ENCODE measurements at regions of chr3 and their contacts with region 1.

Region 1: DNA sequence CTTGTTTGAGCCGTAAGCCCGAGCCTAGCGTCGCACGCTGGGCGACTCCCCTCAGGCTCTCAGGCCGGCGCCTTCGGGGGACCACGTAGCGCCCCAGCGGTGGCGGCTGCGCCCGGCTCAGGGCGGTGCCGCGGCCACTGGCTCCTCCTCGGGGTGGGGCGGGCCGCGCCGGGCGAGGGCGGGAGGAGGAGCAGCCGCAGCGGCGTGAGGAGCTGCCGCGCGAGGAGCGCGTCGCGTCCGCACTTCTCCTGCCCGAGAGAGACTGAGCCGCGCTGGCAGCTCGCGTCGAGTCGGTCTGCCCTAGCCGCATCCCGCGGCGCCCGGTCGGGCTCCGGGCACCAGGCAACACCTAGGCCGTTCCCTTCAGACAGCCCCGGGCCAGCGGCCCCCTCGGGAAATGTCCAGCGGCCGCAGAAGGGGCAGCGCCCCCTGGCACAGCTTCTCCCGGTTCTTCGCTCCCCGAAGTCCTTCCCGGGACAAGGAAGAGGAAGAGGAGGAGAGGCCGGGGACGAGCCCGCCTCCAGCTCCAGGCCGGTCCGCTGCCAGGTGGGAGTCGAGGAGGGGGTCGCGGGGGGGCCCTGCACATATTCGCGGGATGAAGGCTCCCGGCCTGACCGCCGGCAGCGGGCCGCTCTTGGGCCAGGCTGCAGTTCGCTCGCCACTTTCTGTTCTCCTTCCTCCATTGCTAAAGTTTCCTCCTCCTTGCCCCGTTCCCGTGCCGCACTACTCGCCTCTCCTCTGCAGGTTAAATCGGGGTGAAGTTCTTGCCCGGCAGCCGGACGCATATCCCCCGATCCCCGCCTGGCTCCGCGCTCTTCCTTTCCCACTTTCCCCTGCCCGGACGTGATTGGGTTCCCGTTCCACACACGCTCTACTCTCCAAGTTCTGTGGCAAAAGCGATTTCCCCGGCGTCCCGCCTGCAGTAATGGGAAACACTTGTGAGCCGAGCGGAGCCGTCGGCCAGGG is at the start of gene CRYBG3:
- DNase-seq: peak; percentile 85
- H3K4me3 Mint-ChIP-seq: peak within 1 kb of the TSS; percentile 100
- H3K27ac Mint-ChIP-seq: peak within 1 kb of the TSS; percentile 88
- H3K4me1 Mint-ChIP-seq: peaks cover 20% of the 10 kb centered on the region
- H3K27me3 Mint-ChIP-seq: peaks cover 40% of the 10 kb centered on the region
- total RNA-seq, gene CRYBG3: 7.2 and 7.5 TPM in 2 replicates

Region 2: GRCh38 chr3:97409612-97410011 is 412.5 kb before region 1 on chr3:
- intact Hi-C with region 1: no loop called
- DNase-seq: no peak
- H3K4me3 Mint-ChIP-seq: no peak overlapping the region
- H3K27ac Mint-ChIP-seq: no peak overlapping the region
- H3K4me1 Mint-ChIP-seq: no peaks in the 10 kb centered on the region
- H3K27me3 Mint-ChIP-seq: no peaks in the 10 kb centered on the region

Region 3: DNA sequence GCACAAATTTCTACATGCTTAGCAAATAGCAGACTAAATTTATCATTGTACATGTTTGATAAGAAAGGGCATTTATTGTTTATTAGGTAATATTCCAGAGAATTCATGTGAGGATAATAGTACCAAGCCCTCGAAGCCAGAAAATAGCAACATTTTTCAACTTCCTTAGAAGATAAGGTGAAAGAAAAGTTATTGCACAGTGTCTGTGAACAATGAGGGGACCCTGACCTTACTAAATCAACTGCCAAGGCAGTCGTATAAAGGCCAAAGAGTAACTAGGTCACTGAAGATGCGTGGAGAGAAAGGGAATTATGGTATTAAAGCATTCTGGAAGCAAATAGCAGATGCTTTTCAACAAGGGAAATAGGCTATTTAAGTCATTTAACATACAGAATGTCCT is 77.8 kb before region 1 on chr3:
- intact Hi-C with region 1: no loop called
- DNase-seq: no peak
- H3K4me3 Mint-ChIP-seq: no peak overlapping the region
- H3K27ac Mint-ChIP-seq: no peak overlapping the region
- H3K4me1 Mint-ChIP-seq: no peaks in the 10 kb centered on the region
- H3K27me3 Mint-ChIP-seq: peaks cover 14% of the 10 kb centered on the region

Region 4: GRCh38 chr3:97764407-97765238 is 57.5 kb before region 1 on chr3 and contains the start of gene ARL6:
- intact Hi-C with region 1: loop called (anchors 1 kb)
- DNase-seq: peak; percentile 69
- H3K4me3 Mint-ChIP-seq: peak within 1 kb of the TSS; percentile 89
- H3K27ac Mint-ChIP-seq: peak within 1 kb of the TSS; percentile 82
- H3K4me1 Mint-ChIP-seq: peaks cover 19% of the 10 kb centered on the region
- H3K27me3 Mint-ChIP-seq: peaks cover 3% of the 10 kb centered on the region
- total RNA-seq, gene ARL6: 3.2 and 3.9 TPM in 2 replicates

Region 5: GRCh38 chr3:97793420-97794019 is 28.6 kb before region 1 on chr3:
- intact Hi-C with region 1: loop called (anchors 2 kb)
- DNase-seq: no peak
- H3K4me3 Mint-ChIP-seq: no peak overlapping the region
- H3K27ac Mint-ChIP-seq: no peak overlapping the region
- H3K4me1 Mint-ChIP-seq: peaks cover 2% of the 10 kb centered on the region
- H3K27me3 Mint-ChIP-seq: no peaks in the 10 kb centered on the region

Region 6: DNA sequence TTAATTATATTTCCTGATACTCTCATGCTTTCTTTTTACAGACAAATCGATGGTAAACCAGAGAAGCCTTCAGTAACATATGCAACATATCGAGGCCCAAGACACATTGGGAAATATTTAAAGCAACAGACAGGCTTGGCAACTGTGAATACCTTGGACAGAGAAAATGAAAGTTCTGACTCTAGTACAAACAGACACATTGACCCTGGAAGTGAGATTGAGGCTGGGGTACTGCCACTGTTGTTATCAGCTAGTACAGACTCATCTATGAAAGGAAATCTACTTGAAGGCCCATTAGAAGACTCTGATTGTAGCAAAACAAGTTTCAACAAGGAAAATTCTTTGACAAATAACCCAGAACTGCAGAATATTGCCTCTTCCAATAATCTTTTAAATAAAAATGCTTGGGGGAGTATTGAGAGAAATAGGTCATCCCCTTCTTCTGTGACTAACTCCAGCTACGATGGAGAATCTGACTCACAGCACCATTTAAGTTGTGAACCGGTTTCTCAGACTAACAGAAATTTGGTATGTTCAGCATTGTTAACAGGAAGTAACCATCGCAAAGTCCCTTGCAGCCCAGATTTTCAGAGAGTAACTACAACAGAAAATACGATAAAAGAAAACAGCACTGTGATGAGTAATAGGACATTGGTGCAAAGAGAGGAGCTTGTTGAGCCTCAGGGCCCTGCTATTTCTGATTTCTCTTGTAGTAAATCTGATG is 49.9 kb after region 1 on chr3:
- intact Hi-C with region 1: loop called (anchors 1 kb)
- DNase-seq: peak; percentile 20
- H3K4me3 Mint-ChIP-seq: peak overlapping the region; percentile 22
- H3K27ac Mint-ChIP-seq: peak overlapping the region; percentile 82
- H3K4me1 Mint-ChIP-seq: peaks cover 22% of the 10 kb centered on the region
- H3K27me3 Mint-ChIP-seq: no peaks in the 10 kb centered on the region

Region 7: GRCh38 chr3:97971677-97972567 is 149.8 kb after region 1 on chr3 and contains the start of gene RIOX2:
- intact Hi-C with region 1: loop called (anchors 1 kb)
- DNase-seq: peak; percentile 75
- H3K4me3 Mint-ChIP-seq: peak within 1 kb of the TSS; percentile 86
- H3K27ac Mint-ChIP-seq: peak within 1 kb of the TSS; percentile 89
- H3K4me1 Mint-ChIP-seq: peaks cover 68% of the 10 kb centered on the region
- H3K27me3 Mint-ChIP-seq: no peaks in the 10 kb centered on the region
- total RNA-seq, gene RIOX2: 59.9 and 63.2 TPM in 2 replicates

Region 8: GRCh38 chr3:98556164-98557130 is 734.4 kb after region 1 on chr3:
- intact Hi-C with region 1: loop called (anchors 5 kb)
- DNase-seq: peak; percentile 84
- H3K4me3 Mint-ChIP-seq: peak overlapping the region; percentile 77
- H3K27ac Mint-ChIP-seq: peak overlapping the region; percentile 93
- H3K4me1 Mint-ChIP-seq: peaks cover 75% of the 10 kb centered on the region
- H3K27me3 Mint-ChIP-seq: no peaks in the 10 kb centered on the region